A549 (cell line): ENCODE measurements at regions of chr3 and their contacts with region 1.

Region 1: GRCh38 chr3:141441381-141442364 is 45.2 kb upstream of the RASA2 start:
- DNase-seq: peak; percentile 66 to 73
- ATAC-seq: peak; percentile 88 to 94
- H3K4me3 ChIP-seq: no peak overlapping the region
- H3K27ac ChIP-seq: peak overlapping the region; percentile 4 to 68; a peak in 4 of 6 replicates
- H3K4me1 ChIP-seq: peaks cover 23% of the 10 kb centered on the region
- CTCF ChIP-seq: peak; percentile 61
- EP300 ChIP-seq: no peak
- POLR2A ChIP-seq: no peak
- RAD21 ChIP-seq: peak; percentile 62 to 71

Region 2: GRCh38 chr3:141418751-141419150 is 22.9 kb before region 1 on chr3:
- CTCF ChIA-PET with region 1: interaction called, 35 read pairs
- POLR2A ChIA-PET with region 1: no interaction called
- DNase-seq: no peak
- ATAC-seq: no peak
- H3K4me3 ChIP-seq: no peak overlapping the region
- H3K27ac ChIP-seq: peak overlapping the region; percentile 99 to 100
- H3K4me1 ChIP-seq: peaks cover 70% of the 10 kb centered on the region
- CTCF ChIP-seq: no peak
- EP300 ChIP-seq: no peak
- POLR2A ChIP-seq: no peak
- RAD21 ChIP-seq: no peak

Region 3: GRCh38 chr3:141426404-141427034 is 15.2 kb before region 1 on chr3:
- CTCF ChIA-PET with region 1: interaction called, 35 read pairs
- POLR2A ChIA-PET with region 1: no interaction called
- DNase-seq: peak in 1 of 2 experiments; percentile 75
- ATAC-seq: peak in 1 of 2 experiments; percentile 42; a peak in 4 of 6 replicates
- H3K4me3 ChIP-seq: no peak overlapping the region
- H3K27ac ChIP-seq: peak overlapping the region; percentile 99 to 100
- H3K4me1 ChIP-seq: peaks cover 75% of the 10 kb centered on the region
- CTCF ChIP-seq: no peak
- EP300 ChIP-seq: no peak
- POLR2A ChIP-seq: no peak
- RAD21 ChIP-seq: no peak; a peak in 1 of 5 replicates

Region 4: GRCh38 chr3:141466633-141467169 is 25.0 kb after region 1 on chr3:
- CTCF ChIA-PET with region 1: no interaction called
- POLR2A ChIA-PET with region 1: no interaction called
- DNase-seq: no peak
- ATAC-seq: no peak
- H3K4me3 ChIP-seq: no peak overlapping the region
- H3K27ac ChIP-seq: no peak overlapping the region
- H3K4me1 ChIP-seq: no peaks in the 10 kb centered on the region
- CTCF ChIP-seq: no peak
- EP300 ChIP-seq: no peak
- POLR2A ChIP-seq: no peak
- RAD21 ChIP-seq: no peak